Activated CD4-positive, alpha-beta memory T cell treated with anti-CD3 and anti-CD28 coated beads, Interleukin-2, amount 10 ng/mL, durations not matched to agents 7 days and 5 days (primary cell): ENCODE measurements at regions of chr14 and their contacts with region 1.

Region 1: DNA sequence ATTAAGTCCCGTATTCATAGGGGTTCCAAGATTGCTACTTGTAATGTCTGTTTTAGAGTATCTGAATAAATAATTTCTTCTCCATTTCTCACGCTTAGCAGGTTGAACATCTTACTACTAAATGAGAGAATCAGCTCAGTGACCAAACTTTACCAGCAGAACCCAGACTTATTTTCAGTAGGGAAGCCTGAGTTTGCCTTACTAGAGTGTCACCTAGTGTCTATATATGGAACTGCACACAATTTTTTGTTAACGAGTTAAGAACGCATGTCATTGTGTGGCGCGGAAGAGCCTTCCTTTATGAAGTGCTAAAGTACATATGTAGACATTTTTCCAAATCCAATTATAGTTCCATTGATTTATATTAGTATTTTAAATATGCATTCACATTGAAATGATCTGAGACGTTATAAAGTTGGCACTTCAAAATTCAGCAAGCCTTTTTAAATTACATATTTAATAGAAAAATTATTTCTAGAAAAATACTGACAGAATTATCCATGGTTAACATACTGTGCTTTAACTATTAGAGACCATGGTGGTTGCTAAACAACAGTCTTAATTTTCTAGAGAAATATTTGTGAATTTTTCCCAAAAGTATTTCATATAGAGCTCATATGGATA is 88.3 kb downstream of the RPS29 start:
- DNase-seq: no peak
- H3K4me3 Mint-ChIP-seq: no peak overlapping the region
- H3K27ac Mint-ChIP-seq: no peak overlapping the region
- H3K4me1 Mint-ChIP-seq: no peaks in the 10 kb centered on the region
- H3K27me3 Mint-ChIP-seq: peaks cover 23% of the 10 kb centered on the region

Region 2: DNA sequence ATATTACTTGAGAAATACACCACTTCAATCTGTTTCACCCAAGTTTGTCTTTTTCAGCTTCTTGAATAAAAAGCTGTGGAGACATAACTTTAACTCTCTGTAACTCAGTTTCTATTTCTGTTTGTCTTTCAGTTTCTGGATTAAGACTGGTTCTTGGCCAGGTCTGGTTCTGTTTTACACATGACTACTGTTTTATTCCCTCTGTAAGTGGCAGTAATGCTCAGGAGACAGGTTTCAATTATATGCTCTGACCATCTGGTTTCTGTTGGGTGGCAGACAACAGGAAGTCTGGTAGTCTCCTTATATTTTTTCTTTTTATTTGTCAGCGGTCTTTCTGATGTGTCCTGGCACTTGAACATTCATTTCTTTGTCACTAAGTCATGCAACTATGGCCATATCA is 14.6 kb before region 1 on chr14:
- CTCF ChIA-PET with region 1: interaction called, 13 read pairs
- POLR2A ChIA-PET with region 1: no interaction called
- DNase-seq: no peak
- H3K4me3 Mint-ChIP-seq: no peak overlapping the region
- H3K27ac Mint-ChIP-seq: no peak overlapping the region
- H3K4me1 Mint-ChIP-seq: peaks cover 6% of the 10 kb centered on the region
- H3K27me3 Mint-ChIP-seq: peaks cover 12% of the 10 kb centered on the region